Caco-2 (cell line): ENCODE measurements at regions of chr10 and their contacts with region 1.

Region 1: DNA sequence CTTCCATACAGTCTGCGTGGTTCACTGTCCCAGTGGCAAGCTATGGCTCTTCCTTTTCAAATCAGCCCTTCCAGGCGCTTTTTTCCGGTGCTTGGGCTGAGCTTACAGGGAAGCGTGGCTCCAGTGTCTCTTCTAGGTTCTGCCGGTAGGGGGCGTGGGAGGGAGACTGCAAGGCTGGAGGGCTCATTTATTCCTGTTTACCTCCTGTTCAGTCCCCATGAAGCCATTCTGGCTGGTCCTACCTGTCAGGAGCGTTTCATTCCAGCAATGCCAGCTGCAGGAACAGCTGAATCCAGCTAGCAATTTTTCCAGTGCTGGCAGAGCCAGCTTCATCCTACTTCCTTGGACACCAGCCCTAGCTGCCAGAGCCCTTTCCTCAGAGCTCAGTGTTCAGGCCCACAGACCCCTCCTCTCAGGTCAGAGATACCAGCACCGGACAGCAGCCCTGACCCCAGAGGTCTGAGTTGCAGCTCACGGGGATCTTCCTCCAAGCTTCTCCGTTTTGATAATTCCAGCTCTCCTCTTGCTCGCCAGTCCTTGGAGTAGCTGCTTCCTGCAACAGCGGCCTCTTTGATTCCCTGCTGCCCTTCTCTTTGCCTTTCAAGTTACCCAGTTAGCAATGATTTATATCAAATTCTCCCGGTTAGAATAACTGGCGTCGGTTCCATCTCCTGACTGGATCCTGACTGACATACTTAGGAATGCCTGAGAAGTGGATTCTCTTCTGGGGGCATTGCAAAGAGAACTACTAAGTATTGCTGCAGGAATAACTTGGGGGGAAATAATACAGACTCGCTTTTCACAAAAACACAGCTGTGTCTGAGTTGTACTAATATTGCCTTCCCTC is 129.8 kb downstream of the FRMD4A start:
- DNase-seq: peak in 1 of 2 experiments; percentile 49
- H3K4me3 ChIP-seq: no peak overlapping the region
- H3K4me3 Mint-ChIP-seq: no peak overlapping the region
- H3K27ac Mint-ChIP-seq: no peak overlapping the region
- H3K4me1 ChIP-seq: no peaks in the 10 kb centered on the region
- H3K4me1 Mint-ChIP-seq: peaks cover 4% of the 10 kb centered on the region
- H3K27me3 ChIP-seq: no peaks in the 10 kb centered on the region
- H3K27me3 Mint-ChIP-seq: peaks cover 3% of the 10 kb centered on the region
- CTCF ChIP-seq: peak; percentile 41 to 57

Region 2: GRCh38 chr10:14240253-14241189 is 39.6 kb after region 1 on chr10:
- CTCF ChIA-PET with region 1: interaction called, 11 read pairs
- POLR2A ChIA-PET with region 1: no interaction called
- intact Hi-C with region 1: loop called (anchors 1 kb)
- DNase-seq: no peak
- H3K4me3 ChIP-seq: no peak overlapping the region
- H3K4me3 Mint-ChIP-seq: no peak overlapping the region
- H3K27ac Mint-ChIP-seq: no peak overlapping the region
- H3K4me1 ChIP-seq: no peaks in the 10 kb centered on the region; the same call in 1 of the 2 replicates
- H3K4me1 Mint-ChIP-seq: peaks cover 7% of the 10 kb centered on the region
- H3K27me3 ChIP-seq: no peaks in the 10 kb centered on the region
- H3K27me3 Mint-ChIP-seq: no peaks in the 10 kb centered on the region
- CTCF ChIP-seq: peak; percentile 12 to 21

Region 3: DNA sequence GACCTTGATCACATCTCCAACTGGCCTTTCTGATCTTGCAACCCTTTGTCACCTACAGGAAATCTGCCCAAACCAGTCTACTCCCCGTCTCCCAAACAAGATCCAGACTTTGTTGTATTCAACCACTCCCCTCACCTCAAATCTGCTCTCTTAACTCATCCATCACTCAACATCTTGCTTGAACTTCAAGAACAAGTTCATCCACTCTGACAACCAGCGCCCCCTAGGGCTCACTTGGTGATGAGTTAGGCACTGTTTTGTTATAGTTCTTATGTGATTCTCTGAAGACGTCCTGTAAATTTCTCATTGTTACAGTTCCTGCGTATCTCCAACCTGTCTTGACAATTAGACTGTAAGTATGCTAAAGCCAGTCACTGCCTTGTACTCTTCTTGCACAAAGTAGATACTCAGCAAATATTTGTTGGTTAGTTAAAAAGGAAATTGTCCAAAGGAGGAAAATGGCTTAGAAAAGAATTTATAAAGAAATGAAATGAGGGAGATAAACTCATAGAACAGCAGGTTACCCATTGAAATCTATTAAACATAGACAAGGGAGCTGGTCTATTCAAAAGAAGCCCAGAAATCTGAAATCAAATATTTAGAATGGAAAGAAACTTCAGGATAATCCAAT is 124.5 kb after region 1 on chr10:
- CTCF ChIA-PET with region 1: interaction called, 3 read pairs
- POLR2A ChIA-PET with region 1: no interaction called
- intact Hi-C with region 1: loop called (anchors 1 kb)
- DNase-seq: peak; percentile 63 to 73
- H3K4me3 ChIP-seq: no peak overlapping the region
- H3K4me3 Mint-ChIP-seq: no peak overlapping the region
- H3K27ac Mint-ChIP-seq: no peak overlapping the region
- H3K4me1 ChIP-seq: no peaks in the 10 kb centered on the region
- H3K4me1 Mint-ChIP-seq: no peaks in the 10 kb centered on the region
- H3K27me3 ChIP-seq: no peaks in the 10 kb centered on the region
- H3K27me3 Mint-ChIP-seq: peaks cover 10% of the 10 kb centered on the region
- CTCF ChIP-seq: peak; percentile 59 to 64